ENCODE measurements at regions of chr3 and their contacts with region 1.

Region 1: DNA sequence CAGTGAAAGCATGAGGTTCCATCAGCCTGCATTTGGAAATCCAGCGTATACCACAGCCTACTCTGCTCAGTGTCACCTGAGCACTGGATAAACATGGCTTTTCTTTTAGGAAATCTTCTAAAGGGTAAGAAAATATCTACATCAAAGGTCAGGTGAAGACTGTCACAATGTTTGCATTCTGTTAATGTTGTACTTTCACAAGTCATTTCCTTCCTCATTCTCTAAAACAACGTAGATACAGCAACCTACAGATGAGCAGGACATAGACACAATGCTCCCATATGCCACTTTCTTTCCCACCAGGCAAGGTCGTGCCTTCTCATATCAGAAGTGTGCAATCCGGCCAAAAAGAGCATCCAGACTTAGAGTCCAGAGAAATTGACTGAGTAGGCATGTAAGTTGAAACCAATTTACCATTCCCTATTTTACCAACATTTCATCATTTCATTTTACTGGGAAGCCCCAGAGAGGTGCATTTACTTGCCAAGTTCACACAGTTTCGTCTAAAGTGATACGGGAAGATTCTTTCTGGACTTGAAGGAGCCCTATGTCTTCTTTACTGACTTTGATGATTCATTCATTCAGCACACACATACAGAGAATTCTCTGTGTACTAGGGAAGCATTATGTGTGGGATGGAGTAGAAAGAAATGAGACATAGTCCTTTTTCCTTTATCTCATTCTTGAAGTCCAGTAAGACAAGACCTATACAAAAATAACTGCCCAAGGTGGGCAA is 30.6 kb upstream of the LPP start:
- DNase-seq: no peak
- H3K4me3 Mint-ChIP-seq: no peak overlapping the region
- H3K27ac Mint-ChIP-seq: peak overlapping the region; percentile 7
- H3K4me1 Mint-ChIP-seq: peaks cover 17% of the 10 kb centered on the region
- H3K27me3 Mint-ChIP-seq: peaks cover 1% of the 10 kb centered on the region

Region 2: DNA sequence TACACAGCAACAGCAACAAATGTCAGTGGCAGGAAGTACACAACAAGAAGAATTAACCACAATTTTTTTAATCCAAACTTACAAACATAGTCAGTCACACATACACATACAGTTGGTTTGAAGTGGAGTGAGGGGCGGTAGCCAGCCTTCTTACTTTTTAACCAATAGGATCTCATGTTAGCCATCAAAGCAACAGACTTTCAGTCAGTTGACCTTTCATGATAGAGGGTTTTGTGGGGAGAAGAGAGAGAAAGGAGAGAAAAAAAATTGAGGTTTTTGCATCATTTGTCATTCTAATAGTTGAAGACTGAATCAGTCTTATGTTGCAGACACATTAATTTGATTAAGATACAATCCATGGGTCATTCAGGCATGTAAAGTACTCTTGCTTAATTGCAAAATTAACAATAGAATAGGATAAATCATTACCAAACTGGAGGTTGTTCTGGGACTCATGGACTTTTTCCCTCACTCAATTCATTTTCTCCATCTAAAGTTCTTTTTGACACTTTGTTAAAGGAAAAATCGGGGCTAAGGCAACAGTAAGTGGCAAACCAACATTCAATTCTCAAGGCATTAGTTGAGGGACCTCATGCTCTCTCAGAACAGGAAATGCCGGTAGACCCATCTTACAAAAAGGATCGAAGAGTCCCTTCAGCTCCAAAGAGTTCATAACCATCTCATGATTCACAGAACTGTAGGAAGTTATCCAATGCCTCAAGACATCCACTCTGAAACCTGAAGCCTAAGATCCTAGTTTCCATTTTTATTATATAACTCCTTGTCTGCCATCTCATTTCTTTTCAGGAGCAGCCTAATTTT is 128.9 kb before region 1 on chr3:
- intact Hi-C with region 1: loop called (anchors 5 kb)
- DNase-seq: no peak
- H3K4me3 Mint-ChIP-seq: peak overlapping the region; percentile 5
- H3K27ac Mint-ChIP-seq: peak overlapping the region; percentile 79
- H3K4me1 Mint-ChIP-seq: peaks cover 80% of the 10 kb centered on the region
- H3K27me3 Mint-ChIP-seq: no peaks in the 10 kb centered on the region

Region 3: GRCh38 chr3:188076176-188076575 is 47.2 kb before region 1 on chr3:
- intact Hi-C with region 1: loop called (anchors 5 kb)
- DNase-seq: no peak
- H3K4me3 Mint-ChIP-seq: no peak overlapping the region
- H3K27ac Mint-ChIP-seq: no peak overlapping the region
- H3K4me1 Mint-ChIP-seq: peaks cover 9% of the 10 kb centered on the region
- H3K27me3 Mint-ChIP-seq: peaks cover 3% of the 10 kb centered on the region

Region 4: DNA sequence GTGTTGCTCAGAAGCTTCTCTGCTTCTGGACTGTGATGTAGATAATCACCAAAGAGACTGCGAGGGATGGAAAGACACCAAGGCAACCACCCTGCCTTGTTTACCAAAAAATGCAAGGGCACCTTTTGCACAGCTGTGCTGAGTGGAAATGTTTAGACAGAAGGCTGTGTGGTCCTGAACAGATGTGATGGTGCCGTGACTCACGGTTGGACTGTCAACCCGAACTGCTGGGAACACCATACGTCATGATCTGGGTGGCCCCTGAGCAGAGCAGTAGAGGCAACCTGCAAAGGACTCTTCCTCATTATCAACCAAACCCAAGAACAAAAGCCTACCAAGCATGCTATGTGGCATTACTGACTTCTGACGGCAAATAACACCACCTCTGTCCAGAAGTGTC is 30.7 kb before region 1 on chr3:
- intact Hi-C with region 1: loop called (anchors 2 kb)
- DNase-seq: no peak
- H3K4me3 Mint-ChIP-seq: no peak overlapping the region
- H3K27ac Mint-ChIP-seq: peak overlapping the region; percentile 49
- H3K4me1 Mint-ChIP-seq: peaks cover 14% of the 10 kb centered on the region
- H3K27me3 Mint-ChIP-seq: peaks cover 2% of the 10 kb centered on the region

Region 5: GRCh38 chr3:188170461-188171459 is 47.4 kb after region 1 on chr3:
- intact Hi-C with region 1: loop called (anchors 1 kb)
- DNase-seq: no peak
- H3K4me3 Mint-ChIP-seq: peak overlapping the region; percentile 9
- H3K27ac Mint-ChIP-seq: peak overlapping the region; percentile 49
- H3K4me1 Mint-ChIP-seq: peaks cover 52% of the 10 kb centered on the region
- H3K27me3 Mint-ChIP-seq: no peaks in the 10 kb centered on the region

Measured in activated T-helper 1 cell treated with anti-CD3 and anti-CD28 coated beads, Interleukin-12 subunit alpha, Interleukin-12 subunit beta, Interleukin-2, Interleukin-4 antibody, amounts not matched to agents 30 ng/mL and 10 ng/mL and 1 ng/mL, durations not matched to agents 14 hours and 24 hours and 36 hours (primary cell).